ENCODE measurements at regions of chr19 and their contacts with region 1.

Region 1: GRCh38 chr19:17346109-17346671 is 8.8 kb downstream of the GTPBP3 start:
- DNase-seq: peak; percentile 85
- ATAC-seq: peak; percentile 90 to 91
- H3K4me3 ChIP-seq: no peak overlapping the region
- H3K27ac ChIP-seq: no peak overlapping the region
- H3K4me1 ChIP-seq: peaks cover 37% of the 10 kb centered on the region
- H3K27me3 ChIP-seq: no peaks in the 10 kb centered on the region
- CTCF ChIP-seq: peak; percentile 95

Region 2: DNA sequence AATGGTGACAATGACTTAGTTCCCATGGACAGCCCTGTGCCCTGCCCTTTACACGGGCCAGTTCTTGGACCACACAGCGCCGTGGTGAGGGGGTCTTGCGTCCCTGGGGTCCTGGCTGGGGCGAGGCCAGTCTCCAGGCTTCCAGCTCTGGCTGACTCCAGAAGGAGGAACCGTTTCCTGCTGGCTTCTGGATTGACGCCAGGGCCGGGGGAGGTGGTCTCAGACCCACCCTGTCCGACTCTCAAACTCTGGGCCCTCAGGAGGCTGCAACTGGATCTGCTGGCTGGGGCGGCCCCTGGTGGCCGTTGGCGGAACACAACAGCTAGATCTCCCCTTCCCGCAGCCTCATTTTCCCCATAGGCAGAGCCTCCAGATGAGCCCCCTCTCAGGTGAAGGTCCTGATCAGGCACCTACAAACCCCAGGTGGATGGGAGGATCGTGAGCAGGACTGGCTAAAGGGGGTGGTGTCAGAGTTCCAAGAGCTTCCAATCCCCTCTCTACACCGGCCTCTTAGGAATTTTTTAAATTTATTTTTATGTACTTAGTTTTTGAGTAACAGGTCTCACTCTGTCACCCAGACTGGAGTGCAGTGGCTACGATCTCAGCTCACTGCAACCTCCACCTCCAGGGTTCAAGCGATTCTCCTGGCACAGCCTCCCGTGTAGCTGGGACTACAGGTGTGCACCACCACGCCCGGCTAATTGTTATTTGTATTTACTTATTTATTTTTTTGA is 39.9 kb after region 1 on chr19:
- intact Hi-C with region 1: loop called (anchors 5 kb)
- DNase-seq: peak; percentile 79
- ATAC-seq: peak; percentile 62 to 69
- H3K4me3 ChIP-seq: no peak overlapping the region
- H3K27ac ChIP-seq: no peak overlapping the region
- H3K4me1 ChIP-seq: peaks cover 22% of the 10 kb centered on the region
- H3K27me3 ChIP-seq: no peaks in the 10 kb centered on the region
- CTCF ChIP-seq: peak; percentile 94

Measured in lower lobe of right lung (tissue), 2 donors.